ENCODE measurements at regions of chr4 and their contacts with region 1.

Region 1: DNA sequence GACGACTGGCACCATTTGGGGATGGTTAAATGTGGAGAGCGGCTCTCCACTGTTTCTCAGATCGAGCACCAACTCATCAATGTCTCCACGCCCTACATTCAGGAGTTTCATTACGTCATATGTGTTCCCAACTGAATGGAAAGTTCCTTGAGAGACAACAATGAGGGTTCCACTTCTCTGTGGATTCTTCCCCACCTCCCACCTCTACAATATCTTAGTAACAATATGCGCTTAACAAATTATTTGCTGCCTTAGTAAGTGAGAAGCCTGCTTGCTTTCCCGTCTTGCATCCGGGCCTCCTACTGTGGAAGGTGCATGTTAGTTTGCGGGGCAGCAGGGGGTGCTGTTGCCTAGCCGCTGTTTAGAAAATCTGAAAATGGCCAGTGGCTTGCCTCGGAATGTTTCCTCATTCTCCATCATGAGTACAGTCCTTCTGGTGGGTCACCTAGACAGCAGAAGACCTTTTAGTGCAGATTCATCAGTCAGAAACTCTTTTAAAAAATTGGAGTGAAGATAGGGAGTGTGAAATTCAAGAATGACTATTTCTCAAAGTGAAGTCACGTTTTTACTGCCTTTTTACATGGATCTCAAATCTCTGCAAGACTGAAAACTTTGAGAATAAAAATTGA is 55.7 kb downstream of the PHOX2B start:
- DNase-seq: peak; percentile 41
- ATAC-seq: peak; percentile 77 to 82

Region 2: DNA sequence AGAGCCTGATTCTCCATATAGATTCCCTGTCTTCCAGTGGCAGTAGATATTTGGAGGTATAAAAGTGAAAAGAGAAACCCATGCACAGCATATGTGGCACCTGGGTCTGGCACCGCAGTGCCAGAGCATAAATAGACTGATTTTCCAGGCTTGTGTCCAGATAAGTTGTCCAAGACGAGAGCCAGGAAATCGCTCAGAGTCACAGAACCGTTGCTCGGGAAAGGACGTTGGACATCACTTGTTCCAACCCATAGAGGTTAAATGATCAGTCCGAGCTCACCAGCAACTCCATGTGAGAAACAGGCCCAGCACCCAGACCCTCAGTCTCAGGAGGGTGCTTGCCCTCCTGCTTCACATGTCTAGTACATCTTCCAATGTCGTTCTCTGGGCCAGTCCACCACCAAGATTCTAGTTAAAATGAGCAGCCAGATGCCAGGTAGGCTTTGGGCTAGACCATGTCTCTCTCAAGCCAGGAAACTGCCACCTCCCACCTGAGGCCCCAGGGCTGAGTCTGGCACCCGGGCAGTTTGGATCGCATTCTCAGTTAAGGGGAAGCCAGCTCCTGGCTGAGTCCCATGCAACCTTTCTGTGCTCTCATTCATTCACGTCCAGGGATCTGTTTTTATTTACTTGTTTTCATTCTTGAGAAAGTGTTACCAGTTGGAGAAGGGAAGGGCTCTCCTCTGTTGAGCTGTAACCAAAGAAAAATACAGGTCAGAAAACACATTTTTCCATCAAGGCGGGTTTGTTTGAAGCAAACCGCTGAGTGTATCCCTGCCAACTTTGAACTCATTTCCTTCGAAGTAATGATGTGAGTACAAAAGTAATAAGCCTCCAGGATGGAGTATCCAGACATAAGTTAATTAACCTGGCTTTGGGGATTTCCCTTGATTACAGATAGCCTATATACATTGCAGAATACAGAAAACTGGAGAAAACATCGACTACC is 36.0 kb before region 1 on chr4:
- intact Hi-C with region 1: no loop called
- DNase-seq: peak; percentile 40
- ATAC-seq: peak; percentile 81

Region 3: GRCh38 chr4:41882625-41883347 is 190.0 kb after region 1 on chr4:
- intact Hi-C with region 1: loop called (anchors 5 kb)
- DNase-seq: no peak
- ATAC-seq: peak; percentile 86 to 87

Region 4: DNA sequence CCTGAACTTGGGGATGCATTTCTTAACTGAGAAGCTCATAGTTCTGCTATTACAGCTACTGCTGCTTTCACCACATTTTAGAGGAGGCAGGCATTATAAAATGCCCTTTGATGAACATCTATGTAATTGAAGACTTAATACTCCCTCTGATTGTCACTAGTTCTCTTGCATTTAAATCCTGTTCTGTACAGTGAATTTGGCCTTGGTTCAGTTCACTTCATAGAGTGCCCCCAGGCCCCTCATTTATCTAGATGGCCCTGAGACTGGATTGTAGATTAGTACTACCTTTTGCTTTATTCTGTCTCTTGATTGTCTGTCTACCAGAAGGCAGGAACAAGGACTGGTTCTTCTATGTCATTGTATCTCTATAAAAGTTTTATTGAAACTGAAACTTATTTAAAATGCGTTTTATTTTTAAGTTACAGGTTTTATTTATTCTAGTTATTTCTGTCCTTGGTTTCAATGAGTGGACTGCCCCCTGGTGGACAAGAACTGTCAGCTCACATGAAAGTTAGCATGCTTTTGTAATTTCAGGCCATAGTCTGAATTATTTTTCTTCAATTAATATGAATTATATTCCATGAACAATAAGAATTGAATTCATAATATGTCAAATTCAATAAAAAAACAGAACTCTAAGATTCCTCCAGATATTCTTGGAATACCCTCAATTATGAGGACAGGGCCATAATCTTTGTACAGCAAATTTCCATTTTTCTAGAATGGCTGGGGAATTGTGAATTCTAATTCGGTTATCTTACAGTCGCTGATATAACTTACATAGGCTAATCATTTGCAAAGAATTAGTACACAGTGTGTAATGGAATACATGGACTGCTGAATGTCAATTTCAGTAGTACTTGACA is 195.2 kb after region 1 on chr4:
- intact Hi-C with region 1: loop called (anchors 5 kb)
- DNase-seq: no peak
- ATAC-seq: no peak